HCT116 (cell line): ENCODE measurements at regions of chr20 and their contacts with region 1.

Region 1: DNA sequence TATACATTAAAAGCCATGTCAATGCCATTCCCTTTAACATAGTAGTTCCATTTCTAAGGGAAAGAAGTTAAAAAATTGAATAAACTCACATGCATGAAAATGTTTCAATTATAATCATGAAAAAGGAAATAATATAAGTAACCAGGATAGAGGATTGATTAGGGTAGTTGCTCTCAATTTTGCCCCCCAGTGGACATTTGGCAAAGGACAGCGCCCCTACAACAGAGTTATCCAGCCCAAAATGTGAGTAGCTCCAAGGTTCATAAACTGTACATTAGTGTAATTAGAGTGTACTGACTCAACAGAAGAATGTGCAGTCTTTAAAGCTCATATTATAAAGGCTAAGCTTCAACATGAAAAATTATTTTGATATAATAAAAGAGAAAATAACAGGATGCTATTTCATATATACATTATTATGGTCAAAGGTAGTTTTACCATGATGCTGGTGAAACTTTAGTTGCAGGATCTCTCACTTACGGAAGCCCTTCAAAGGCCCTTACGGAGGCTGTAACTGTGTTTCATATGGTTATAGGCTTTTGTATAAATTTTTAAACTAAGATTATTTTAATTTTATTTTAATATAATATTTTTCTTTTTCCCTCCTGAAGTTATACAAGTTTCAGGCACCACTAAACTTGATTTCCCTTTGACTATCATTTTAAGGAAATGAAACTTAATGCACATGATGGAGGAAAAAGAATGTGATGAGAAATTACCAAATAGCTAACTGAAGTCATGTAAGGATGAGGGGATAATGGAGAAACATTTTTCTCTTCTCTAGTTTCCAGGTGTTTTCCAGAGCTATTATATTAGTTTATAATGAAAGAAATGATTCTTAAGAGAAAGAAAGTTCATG is 403.6 kb downstream of the PLCB1 start:
- DNase-seq: no peak
- ATAC-seq: peak; percentile 62
- H3K4me3 ChIP-seq: no peak overlapping the region
- H3K27ac ChIP-seq: no peak overlapping the region
- H3K4me1 ChIP-seq: no peaks in the 10 kb centered on the region; a peak in 1 of 4 replicates
- H3K27me3 ChIP-seq: no peaks in the 10 kb centered on the region
- CTCF ChIP-seq: peak in 2 of 3 experiments; percentile 55 to 66; a peak in 4 of 6 replicates
- POLR2A ChIP-seq: no peak
- RAD21 ChIP-seq: no peak

Region 2: GRCh38 chr20:8131598-8132483 is 403.8 kb before region 1 on chr20 and contains the start of gene PLCB1:
- CTCF ChIA-PET with region 1: no interaction called
- POLR2A ChIA-PET with region 1: no interaction called
- RAD21 ChIA-PET with region 1: no interaction called
- intact Hi-C with region 1: loop called (anchors 10 kb)
- DNase-seq: peak; percentile 13
- ATAC-seq: peak; percentile 99
- H3K4me3 ChIP-seq: peak within 1 kb of the TSS; percentile 33 to 53
- H3K27ac ChIP-seq: no peak within 1 kb of the TSS
- H3K4me1 ChIP-seq: peaks cover 0 to 5% of the 10 kb centered on the region in 2 experiments; a peak in 2 of 4 replicates
- H3K27me3 ChIP-seq: no peaks in the 10 kb centered on the region
- CTCF ChIP-seq: peak; percentile 45 to 78 (median 59); a peak in 4 of 6 replicates
- POLR2A ChIP-seq: no peak
- RAD21 ChIP-seq: peak; percentile 75
- total RNA-seq, gene PLCB1: 15.8 TPM